OCI-LY7 (cell line): ENCODE measurements at regions of chr16 and their contacts with region 1.

Region 1: DNA sequence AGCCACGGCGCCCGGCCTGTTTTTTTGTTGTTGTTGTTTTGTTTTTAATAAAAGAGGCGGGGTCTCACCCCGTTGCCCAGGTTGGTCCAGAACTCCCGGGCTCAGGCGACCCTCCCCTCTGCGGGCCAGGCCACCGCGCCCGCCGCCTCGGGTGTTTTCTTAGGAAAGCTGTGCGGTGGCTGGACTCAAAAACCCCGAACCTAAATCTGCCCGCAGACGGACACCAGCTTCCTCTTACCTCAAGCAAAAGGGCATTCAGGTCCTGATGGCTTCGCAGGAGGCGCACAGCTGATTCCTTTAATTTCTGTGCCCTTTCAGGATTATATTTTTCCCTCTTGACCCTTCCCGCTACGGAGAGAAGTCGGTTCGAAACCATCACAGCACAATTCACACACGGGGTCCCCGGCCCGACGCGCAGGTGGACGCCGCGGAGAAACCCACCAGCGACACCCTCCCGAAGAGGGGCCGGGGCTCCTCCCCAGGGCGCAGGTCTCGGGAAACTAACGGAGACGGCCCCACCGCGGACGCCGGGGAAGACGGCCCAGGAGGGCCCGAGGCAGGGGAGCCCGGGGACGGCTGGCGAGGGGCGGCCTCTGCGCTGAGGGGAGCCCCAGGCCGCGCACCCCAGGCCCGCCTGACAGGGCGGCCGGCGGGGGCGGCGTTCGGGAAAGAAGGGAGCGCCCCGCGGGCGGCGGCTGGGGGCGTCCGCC is 653 bp downstream of the FANCA start:
- DNase-seq: peak; percentile 54
- H3K4me3 ChIP-seq: peak overlapping the region; percentile 100
- H3K27ac ChIP-seq: peak overlapping the region; percentile 92
- H3K4me1 ChIP-seq: peaks cover 65% of the 10 kb centered on the region
- CTCF ChIP-seq: no peak

Region 2: GRCh38 chr16:89764711-89765201 is 51.0 kb before region 1 on chr16:
- CTCF ChIA-PET with region 1: no interaction called
- POLR2A ChIA-PET with region 1: no interaction called
- intact Hi-C with region 1: loop called (anchors 1 kb)
- DNase-seq: peak; percentile 93
- H3K4me3 ChIP-seq: peak overlapping the region; percentile 32
- H3K27ac ChIP-seq: peak overlapping the region; percentile 84
- H3K4me1 ChIP-seq: peaks cover 20% of the 10 kb centered on the region
- CTCF ChIP-seq: no peak

Region 3: DNA sequence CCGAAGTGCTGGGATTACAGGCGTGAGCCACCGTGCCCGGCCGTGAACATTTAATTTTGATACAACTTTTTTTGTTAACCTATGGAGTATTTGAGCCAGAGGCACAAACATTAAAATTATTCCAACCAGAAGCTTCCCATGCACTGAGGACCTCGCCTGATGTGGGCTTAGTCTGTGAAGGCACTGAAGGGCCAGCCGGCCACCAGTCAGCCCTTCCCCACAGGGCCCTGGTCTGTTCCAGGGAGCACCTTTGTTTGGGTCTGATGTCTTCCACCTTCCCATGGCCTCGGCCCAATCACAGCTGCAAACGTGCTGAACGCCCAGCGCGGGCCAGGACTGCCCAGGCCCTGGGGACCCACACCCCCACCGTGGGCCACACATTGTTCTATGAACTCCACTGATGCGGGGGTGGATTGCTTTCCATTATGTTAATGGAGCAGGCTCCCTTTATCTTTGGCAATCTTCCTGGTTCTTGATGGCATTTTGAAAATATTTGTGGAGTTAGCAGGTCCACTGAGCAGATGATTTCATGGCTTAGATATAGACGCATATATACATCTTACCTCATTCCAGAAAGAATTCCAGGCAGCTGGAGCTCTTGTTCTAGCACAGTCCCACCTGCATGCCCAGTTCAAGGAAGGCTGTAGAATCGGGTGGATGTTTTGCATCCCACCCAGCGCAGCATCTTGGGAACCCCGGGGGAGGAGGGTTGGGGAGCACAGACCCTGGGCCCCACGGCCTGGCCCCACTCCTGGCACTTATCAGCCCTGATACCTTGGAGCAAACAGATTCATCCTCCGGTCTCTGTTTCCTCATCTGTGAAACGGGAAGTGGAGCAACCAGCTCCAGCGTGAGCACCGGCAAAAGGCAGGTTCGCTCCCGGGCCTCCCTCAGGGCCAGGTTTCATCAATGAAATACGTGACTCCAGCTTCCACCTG is 26.9 kb after region 1 on chr16:
- CTCF ChIA-PET with region 1: no interaction called
- POLR2A ChIA-PET with region 1: interaction called, 24 read pairs
- intact Hi-C with region 1: loop called (anchors 1 kb)
- DNase-seq: no peak
- H3K4me3 ChIP-seq: no peak overlapping the region
- H3K27ac ChIP-seq: peak overlapping the region; percentile 88
- H3K4me1 ChIP-seq: peaks cover 73% of the 10 kb centered on the region
- CTCF ChIP-seq: no peak

Region 4: GRCh38 chr16:89917773-89918452 is 102.1 kb after region 1 on chr16:
- CTCF ChIA-PET with region 1: no interaction called
- POLR2A ChIA-PET with region 1: no interaction called
- intact Hi-C with region 1: loop called (anchors 10 kb)
- DNase-seq: peak; percentile 96
- H3K4me3 ChIP-seq: peak overlapping the region; percentile 58
- H3K27ac ChIP-seq: peak overlapping the region; percentile 90
- H3K4me1 ChIP-seq: peaks cover 52% of the 10 kb centered on the region
- CTCF ChIP-seq: no peak